ENCODE measurements at regions of chr3 and their contacts with region 1.

Region 1: GRCh38 chr3:141452036-141452435 is 34.8 kb upstream of the RASA2 start:
- DNase-seq: peak; percentile 73
- H3K4me3 Mint-ChIP-seq: no peak overlapping the region
- H3K27ac Mint-ChIP-seq: no peak overlapping the region
- H3K4me1 Mint-ChIP-seq: peaks cover 11% of the 10 kb centered on the region
- H3K27me3 Mint-ChIP-seq: no peaks in the 10 kb centered on the region

Region 2: GRCh38 chr3:141204343-141204742 is 247.7 kb before region 1 on chr3:
- CTCF ChIA-PET with region 1: no interaction called
- POLR2A ChIA-PET with region 1: no interaction called
- DNase-seq: no peak
- H3K4me3 Mint-ChIP-seq: no peak overlapping the region
- H3K27ac Mint-ChIP-seq: no peak overlapping the region
- H3K4me1 Mint-ChIP-seq: no peaks in the 10 kb centered on the region
- H3K27me3 Mint-ChIP-seq: peaks cover 22% of the 10 kb centered on the region

Region 3: GRCh38 chr3:141303481-141304223 is 148.4 kb before region 1 on chr3:
- CTCF ChIA-PET with region 1: interaction called, 34 read pairs
- POLR2A ChIA-PET with region 1: interaction called, 3 read pairs
- DNase-seq: peak; percentile 86
- H3K4me3 Mint-ChIP-seq: no peak overlapping the region
- H3K27ac Mint-ChIP-seq: no peak overlapping the region
- H3K4me1 Mint-ChIP-seq: peaks cover 61% of the 10 kb centered on the region
- H3K27me3 Mint-ChIP-seq: peaks cover under 1% of the 10 kb centered on the region

Region 4: DNA sequence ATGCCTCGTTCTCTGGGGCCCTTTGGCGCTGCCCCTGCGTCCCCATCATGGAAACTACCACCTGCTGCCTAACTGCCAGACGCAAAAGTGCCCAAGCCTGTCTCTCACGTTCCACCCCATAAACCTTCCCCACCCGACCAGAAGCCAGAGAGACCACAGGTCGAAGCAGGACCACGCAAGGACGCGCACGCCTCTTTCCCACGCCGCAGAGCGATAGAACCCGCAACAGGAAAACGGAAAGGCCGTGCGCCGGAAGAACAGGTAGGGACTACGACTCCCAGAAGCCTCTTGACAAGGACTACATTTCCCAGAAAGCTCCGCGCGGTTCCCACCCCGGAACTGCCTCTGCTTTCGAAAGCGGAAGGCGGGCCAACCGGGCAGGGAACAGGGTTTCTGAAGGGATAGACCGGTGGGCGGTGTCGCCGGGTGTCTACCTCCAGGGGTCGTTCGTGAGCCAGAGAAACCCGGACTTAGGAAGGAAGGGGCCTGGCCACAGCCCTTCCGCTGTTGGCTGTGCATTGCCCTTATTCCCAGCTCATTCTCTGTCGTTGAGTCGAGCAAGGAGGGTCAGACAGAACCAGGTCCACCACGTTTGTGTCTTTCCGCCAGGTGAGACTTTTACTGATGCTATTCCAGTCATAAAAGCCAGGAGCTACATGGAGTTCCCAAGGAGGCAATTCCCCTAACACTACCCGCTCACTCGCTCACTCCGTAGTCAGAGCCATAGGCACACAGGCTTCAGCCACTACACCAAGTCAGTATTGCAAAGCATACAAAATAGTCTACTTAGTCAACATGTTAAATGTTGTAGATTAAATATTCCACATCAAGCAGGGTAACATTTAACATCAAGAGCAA is 140.3 kb before region 1 on chr3:
- CTCF ChIA-PET with region 1: interaction called, 50 read pairs
- POLR2A ChIA-PET with region 1: interaction called, 3 read pairs
- DNase-seq: peak; percentile 99
- H3K4me3 Mint-ChIP-seq: peak overlapping the region; percentile 90
- H3K27ac Mint-ChIP-seq: peak overlapping the region; percentile 96
- H3K4me1 Mint-ChIP-seq: peaks cover 59% of the 10 kb centered on the region
- H3K27me3 Mint-ChIP-seq: no peaks in the 10 kb centered on the region

Region 5: DNA sequence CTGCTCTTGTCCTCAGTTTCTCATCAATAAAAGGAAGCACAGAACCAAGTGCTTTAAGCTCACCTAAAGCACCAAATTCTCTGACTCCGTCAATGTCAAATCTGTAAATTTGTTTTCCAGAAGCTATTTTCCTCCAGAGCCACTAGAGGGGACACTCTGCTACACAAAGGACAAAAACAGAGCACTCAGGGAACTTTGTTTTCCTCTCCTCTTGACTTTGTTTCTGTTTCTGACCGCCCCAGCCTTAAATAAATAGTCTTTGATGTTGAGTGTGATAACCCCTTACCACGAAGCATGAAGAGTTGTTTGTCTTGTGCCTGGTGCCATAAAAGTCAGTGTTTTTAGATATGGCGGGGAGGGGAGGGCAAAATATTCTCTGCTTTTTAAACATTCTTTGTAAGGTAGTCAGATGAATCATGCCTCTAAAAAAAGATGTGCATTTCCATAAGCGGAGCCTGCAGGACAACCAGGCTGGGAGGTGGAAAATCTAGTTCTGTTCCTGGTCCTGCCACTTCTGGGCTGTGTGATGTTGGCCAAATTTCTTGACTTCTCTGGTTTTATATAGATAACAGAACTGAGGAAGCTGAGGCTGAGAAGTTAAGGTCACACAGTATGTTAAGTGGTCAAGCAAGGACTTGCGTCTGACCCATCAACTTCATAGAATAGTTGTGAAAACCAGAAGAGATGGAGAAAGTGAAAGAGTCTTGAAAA is 91.0 kb before region 1 on chr3:
- CTCF ChIA-PET with region 1: interaction called, 21 read pairs
- POLR2A ChIA-PET with region 1: interaction called, 7 read pairs
- DNase-seq: peak; percentile 44
- H3K4me3 Mint-ChIP-seq: no peak overlapping the region
- H3K27ac Mint-ChIP-seq: peak overlapping the region; percentile 3
- H3K4me1 Mint-ChIP-seq: peaks cover 11% of the 10 kb centered on the region
- H3K27me3 Mint-ChIP-seq: peaks cover 2% of the 10 kb centered on the region

Region 6: DNA sequence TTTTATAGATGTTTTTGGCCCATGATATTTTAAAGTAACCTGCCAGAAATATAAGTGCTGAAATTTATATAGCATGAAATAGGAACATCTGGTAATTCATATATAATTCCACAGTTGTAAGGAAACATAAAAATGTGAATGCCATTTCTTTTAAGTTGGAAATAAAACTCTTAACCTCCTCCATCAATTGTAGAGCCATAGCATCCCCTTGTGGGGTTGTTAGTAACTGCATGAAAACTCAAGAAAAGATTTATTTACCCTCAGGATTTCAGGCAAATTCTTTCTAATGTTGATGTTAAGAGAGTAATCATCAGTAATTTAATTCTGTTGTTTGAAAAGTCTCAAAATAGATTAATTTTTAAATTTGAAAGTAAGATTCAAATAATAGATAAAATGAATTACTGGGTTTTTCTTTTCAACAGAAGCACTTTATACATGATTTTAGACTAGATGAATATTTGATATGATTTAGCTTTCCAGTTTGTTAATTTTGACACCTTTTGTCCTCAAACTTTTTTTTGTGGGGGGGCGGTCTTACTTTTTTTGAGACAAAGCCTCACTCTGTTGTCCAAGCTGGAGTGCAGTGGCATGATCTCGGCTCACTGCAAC is 109.5 kb after region 1 on chr3:
- CTCF ChIA-PET with region 1: interaction called, 13 read pairs
- POLR2A ChIA-PET with region 1: no interaction called
- DNase-seq: peak; percentile 71
- H3K4me3 Mint-ChIP-seq: no peak overlapping the region
- H3K27ac Mint-ChIP-seq: peak overlapping the region; percentile 68
- H3K4me1 Mint-ChIP-seq: peaks cover 21% of the 10 kb centered on the region
- H3K27me3 Mint-ChIP-seq: no peaks in the 10 kb centered on the region